ENCODE measurements at regions of chr2 and their contacts with region 1.

Region 1: GRCh38 chr2:9843229-9844035 is at the start of gene TAF1B:
- DNase-seq: peak; percentile 65 to 88 (median 74)
- ATAC-seq: peak; percentile 79 to 83 (median 81)
- H3K4me3 ChIP-seq: peak within 1 kb of the TSS; percentile 74 to 87
- H3K4me3 Mint-ChIP-seq: peak within 1 kb of the TSS; percentile 91 to 96 (median 92)
- H3K27ac ChIP-seq: peak within 1 kb of the TSS; percentile 76
- H3K27ac Mint-ChIP-seq: peak within 1 kb of the TSS; percentile 84 to 93
- H3K4me1 ChIP-seq: peaks cover 6 to 14% of the 10 kb centered on the region in 2 experiments
- H3K4me1 Mint-ChIP-seq: peaks cover 45 to 49% (median 47%) of the 10 kb centered on the region in 3 donors
- H3K27me3 ChIP-seq: no peaks in the 10 kb centered on the region
- H3K27me3 Mint-ChIP-seq: no peaks in the 10 kb centered on the region
- total RNA-seq, gene TAF1B: 9.2 to 21.7 (median 15.2) TPM

Region 2: DNA sequence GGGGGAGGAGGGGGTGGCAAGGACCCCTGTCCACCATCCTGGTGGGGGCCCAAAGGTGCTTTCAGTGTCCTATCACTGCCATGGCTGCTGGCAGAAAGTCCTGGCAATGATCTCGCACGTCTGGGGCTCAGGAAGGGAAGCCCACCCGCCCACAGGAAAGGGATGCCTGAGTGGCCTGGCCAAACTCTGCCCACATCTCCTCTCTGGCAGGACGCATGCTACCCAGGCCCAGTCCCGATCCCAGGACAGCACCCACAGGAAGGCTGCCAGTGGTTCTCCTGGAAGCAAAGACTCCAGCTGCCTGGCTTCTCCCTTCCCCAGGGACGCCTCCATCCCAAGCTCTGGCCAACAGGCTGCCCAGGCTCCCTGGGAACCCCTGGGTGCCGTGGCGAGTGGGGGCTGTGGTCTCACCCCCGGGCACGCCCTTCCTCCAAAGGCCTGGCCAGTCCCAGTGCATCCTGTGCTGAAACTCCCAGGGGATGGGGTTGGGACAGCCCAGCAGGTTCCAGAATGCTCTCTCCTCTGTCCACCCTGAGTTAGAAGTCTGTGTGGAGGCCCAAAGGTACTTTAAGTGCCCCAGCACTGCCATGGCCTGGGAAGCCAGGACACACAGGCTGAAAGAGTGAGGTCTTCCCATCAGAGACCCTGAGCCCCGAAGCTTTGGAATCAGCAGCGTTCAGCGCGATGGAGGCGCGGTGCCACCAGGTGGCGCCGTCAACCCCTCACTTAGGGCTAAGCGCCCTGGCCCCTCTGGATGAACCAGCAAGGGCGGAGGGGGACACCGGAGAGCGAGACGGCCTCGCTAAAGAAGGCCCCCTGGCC is 29.9 kb before region 1 on chr2:
- CTCF ChIA-PET with region 1: interaction called, 6 to 10 read pairs
- POLR2A ChIA-PET with region 1: interaction called in 1 of 2 experiments, 3 read pairs
- DNase-seq: peak; percentile 16 to 81 (median 55)
- ATAC-seq: peak; percentile 72 to 86 (median 81)
- H3K4me3 ChIP-seq: no peak overlapping the region
- H3K4me3 Mint-ChIP-seq: no peak overlapping the region
- H3K27ac ChIP-seq: no peak overlapping the region
- H3K27ac Mint-ChIP-seq: no peak overlapping the region
- H3K4me1 ChIP-seq: peaks cover 0 to 20% of the 10 kb centered on the region in 2 experiments
- H3K4me1 Mint-ChIP-seq: peaks cover 11 to 25% (median 19%) of the 10 kb centered on the region in 3 donors
- H3K27me3 ChIP-seq: peaks cover 0 to 24% of the 10 kb centered on the region in 2 experiments
- H3K27me3 Mint-ChIP-seq: peaks cover 0 to 8% of the 10 kb centered on the region in 2 donors

Measured in T-cell (primary cell).